Naive thymus-derived CD8-positive, alpha-beta T cell (primary cell): ENCODE measurements at regions of chr12 and their contacts with region 1.

Region 1: DNA sequence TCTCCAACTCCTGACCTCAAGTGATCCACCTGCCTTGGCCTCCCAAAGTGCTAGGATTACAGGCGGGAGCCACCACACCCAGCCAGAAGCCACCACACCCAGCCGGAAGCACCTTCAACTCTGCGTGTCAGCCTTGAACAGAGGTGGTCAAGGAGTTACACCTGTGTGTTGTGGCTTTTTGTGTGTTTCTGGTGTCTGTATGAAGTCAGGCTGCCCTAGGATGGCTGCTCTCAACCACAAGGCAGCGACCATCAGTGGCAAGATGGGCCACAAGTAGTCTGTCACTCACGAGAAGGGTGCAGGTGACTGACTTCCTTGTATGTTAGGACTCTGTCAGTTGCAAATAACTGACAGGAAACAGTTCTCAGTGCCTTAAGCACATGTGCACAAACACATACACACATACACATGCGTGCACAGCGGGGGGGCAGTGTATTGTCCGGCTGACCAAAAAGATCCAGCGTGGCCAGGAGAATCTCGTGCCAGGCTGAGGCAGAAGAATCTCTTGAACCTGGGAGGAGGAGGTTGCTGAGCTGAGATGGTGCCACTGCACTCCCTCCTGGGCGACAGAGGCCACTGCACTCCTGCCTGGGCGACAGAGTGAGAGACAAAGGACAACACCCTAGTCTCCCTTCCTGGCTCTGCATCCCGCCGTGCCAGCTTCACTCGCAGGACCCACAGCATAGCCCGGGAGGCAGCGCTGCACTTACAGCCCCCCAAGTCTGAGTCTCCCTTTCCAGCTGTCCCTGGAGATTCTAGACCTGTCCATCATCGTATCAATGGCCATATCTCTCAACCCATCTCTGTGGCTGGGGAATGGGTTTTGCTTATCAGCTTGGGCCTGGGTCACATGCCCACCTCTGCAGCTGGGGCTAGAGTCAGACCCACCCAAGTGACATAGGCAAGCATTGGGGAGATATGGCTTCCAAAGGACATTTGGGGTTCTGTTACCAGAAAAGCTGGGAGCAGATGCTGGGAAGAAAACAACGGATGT is 13.7 kb downstream of the P2RX4 start:
- DNase-seq: peak in 6 of 10 donors; percentile 36 to 67 (median 42)
- ATAC-seq: peak; percentile 61 to 66
- H3K4me3 Mint-ChIP-seq: peak overlapping the region; percentile 3 to 81 (median 66)
- H3K27ac Mint-ChIP-seq: peak overlapping the region; percentile 88 to 99 (median 96)
- H3K4me1 Mint-ChIP-seq: peaks cover 16 to 53% (median 42%) of the 10 kb centered on the region in 4 donors
- H3K27me3 Mint-ChIP-seq: no peaks in the 10 kb centered on the region

Region 2: GRCh38 chr12:121209624-121210572 is 13.7 kb before region 1 on chr12 and contains the start of gene P2RX4:
- POLR2A ChIA-PET with region 1: interaction called, 46 read pairs
- DNase-seq: peak; percentile 71 to 94 (median 87)
- ATAC-seq: peak; percentile 88
- H3K4me3 Mint-ChIP-seq: peak within 1 kb of the TSS; percentile 82 to 95 (median 90)
- H3K27ac Mint-ChIP-seq: peak within 1 kb of the TSS; percentile 92 to 99 (median 96)
- H3K4me1 Mint-ChIP-seq: peaks cover 8 to 39% (median 29%) of the 10 kb centered on the region in 4 donors
- H3K27me3 Mint-ChIP-seq: no peaks in the 10 kb centered on the region
- polyA plus RNA-seq, gene P2RX4: 27.8 to 33.8 (median 29.3) TPM

Region 3: GRCh38 chr12:121240484-121241101 is 17.0 kb after region 1 on chr12:
- POLR2A ChIA-PET with region 1: interaction called, 47 read pairs
- DNase-seq: peak; percentile 84 to 99 (median 98)
- ATAC-seq: peak; percentile 90 to 92
- H3K4me3 Mint-ChIP-seq: peak overlapping the region; percentile 79 to 91 (median 87)
- H3K27ac Mint-ChIP-seq: peak overlapping the region; percentile 99 to 100 (median 100)
- H3K4me1 Mint-ChIP-seq: peaks cover 15 to 57% (median 49%) of the 10 kb centered on the region in 4 donors
- H3K27me3 Mint-ChIP-seq: no peaks in the 10 kb centered on the region